Right ventricle myocardium superior (tissue), 1 donor: ENCODE measurements at regions of chr3 and their contacts with region 1.

Region 1: DNA sequence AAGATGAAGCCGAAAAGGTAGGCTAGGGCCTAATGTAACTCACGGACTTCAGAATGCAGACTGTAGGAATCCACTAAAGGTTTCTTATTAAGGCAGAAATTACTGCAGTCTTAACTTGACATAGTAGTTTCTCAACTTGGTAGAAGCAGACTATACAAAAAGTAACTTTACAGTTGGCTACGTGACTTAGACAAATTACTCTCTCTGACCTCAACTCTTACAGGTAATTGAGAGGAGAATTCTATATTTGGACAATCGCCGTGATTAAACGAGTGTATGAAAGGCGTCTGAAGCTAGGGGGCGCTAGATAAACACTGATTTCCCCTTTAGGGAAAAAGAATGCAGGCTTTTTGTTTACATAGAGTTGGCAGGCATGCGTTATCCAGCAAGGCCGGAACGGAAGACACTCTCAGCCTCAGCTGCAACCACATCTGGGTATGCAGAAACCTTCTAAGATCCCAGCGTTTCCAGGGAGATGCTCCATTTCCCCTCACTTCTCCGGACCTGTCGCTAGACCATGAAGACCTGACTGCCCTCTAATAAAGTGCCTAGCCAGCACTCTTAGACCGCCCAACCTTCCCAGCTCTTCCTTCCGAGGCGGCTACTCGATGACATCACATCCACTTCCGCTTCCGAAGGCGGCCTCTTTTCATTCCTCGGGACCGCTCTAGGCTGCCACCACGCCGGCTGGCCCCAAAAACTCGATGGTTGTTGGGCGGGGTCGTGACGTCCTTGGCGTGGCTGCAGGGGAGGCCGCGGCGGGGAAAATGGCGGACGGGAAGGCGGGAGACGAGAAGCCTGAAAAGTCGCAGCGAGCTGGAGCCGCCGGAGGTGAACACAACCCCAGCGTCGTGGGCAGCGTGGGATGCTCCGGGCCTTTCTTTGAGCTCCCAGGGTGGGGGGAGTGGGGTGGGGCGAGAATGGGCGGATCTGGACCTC is at the start of gene PCNP:
- DNase-seq: peak; percentile 99
- ATAC-seq: peak; percentile 91
- total RNA-seq, gene PCNP: 121 TPM

Region 2: GRCh38 chr3:101351829-101352228 is 221.9 kb before region 1 on chr3:
- intact Hi-C with region 1: no loop called
- DNase-seq: no peak
- ATAC-seq: no peak

Region 3: DNA sequence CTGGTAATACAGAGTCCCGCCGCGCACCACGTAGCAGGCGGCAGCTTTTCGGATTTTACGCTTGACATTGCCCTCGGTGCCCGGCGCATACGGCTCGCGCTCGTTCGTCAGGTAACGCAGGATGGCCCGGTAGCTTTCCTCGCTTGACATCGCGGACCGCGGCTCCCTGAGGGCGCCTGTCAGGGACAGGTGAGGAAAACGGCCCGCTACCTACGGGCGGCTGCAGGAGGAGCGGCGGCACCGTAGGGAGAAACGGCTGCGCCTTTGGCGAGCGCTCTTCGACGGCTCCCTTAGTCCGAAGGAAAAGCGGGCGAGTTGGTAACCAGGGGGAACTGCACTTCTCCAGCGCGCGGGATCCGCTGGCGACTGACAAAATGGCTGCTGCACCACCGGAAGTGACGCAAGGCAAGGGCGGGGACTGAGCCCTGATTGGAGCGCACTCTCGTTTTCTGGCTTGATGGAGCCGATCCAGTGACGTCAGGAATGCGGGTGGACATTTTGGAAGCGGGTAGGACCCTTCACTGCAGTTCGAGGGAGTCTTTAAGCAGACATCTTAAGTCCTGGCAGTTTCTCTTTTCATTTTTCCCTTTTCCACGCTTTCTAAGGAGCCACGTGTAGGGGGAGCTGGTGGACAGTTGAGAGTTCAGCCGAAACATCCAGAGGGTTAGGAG is 103.2 kb after region 1 on chr3 and contains the start of gene ZBTB11:
- intact Hi-C with region 1: loop called (anchors 10 kb)
- DNase-seq: peak; percentile 100
- ATAC-seq: peak; percentile 92
- total RNA-seq, gene ZBTB11: 9.8 TPM